Heart right ventricle (tissue), 16 donors: ENCODE measurements at regions of chr16 and their contacts with region 1.

Region 1: GRCh38 chr16:88063211-88063773 is 112.1 kb downstream of the BANP start:
- DNase-seq: peak in 1 of 2 donors; percentile 27
- ATAC-seq: peak; percentile 38 to 81 (median 67)
- H3K4me3 ChIP-seq: no peak overlapping the region
- H3K27ac ChIP-seq: peak overlapping the region in 7 of 10 donors; percentile 29 to 74 (median 59)
- H3K4me1 ChIP-seq: peaks cover 0 to 25% (median 20%) of the 10 kb centered on the region in 9 donors
- H3K27me3 ChIP-seq: no peaks in the 10 kb centered on the region
- CTCF ChIP-seq: peak in 6 of 9 donors; percentile 9 to 44 (median 30)

Region 2: GRCh38 chr16:87982491-87983415 is 80.5 kb before region 1 on chr16:
- intact Hi-C with region 1: loop called in 1 of 10 experiments (anchors 10 kb)
- DNase-seq: no peak
- ATAC-seq: peak in 5 of 8 donors; percentile 4 to 23 (median 12)
- H3K4me3 ChIP-seq: no peak overlapping the region
- H3K27ac ChIP-seq: no peak overlapping the region
- H3K4me1 ChIP-seq: peaks cover 0 to 37% (median 3%) of the 10 kb centered on the region in 9 donors
- H3K27me3 ChIP-seq: no peaks in the 10 kb centered on the region
- CTCF ChIP-seq: no peak

Region 3: DNA sequence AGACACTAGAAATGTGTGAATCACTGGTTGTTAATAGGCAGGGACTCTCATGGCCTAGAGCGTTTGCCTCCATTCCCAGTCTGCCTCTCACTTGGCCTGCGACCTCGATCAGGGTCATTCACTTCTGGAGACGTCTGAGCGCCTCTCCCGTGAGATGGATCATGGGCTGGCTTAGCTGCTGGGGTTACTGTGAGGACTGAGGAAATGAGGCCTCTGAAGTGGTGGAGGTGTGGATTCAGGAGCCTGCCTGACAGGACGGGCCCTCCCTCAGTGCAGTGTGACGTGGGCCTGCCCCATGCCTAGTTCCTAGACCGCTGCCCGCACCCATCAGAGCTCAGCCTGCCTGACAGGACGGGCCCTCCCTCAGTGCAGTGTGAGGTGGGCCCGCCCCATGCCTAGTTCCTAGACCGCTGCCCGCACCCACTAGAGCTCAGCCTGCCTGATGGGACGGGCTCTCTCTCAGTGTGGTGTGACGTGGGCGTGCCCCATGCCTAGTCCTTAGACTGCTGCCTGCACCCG is 50.1 kb before region 1 on chr16:
- intact Hi-C with region 1: no loop called
- DNase-seq: no peak
- ATAC-seq: peak in 1 of 8 donors; percentile 24
- H3K4me3 ChIP-seq: no peak overlapping the region
- H3K27ac ChIP-seq: no peak overlapping the region
- H3K4me1 ChIP-seq: no peaks in the 10 kb centered on the region
- H3K27me3 ChIP-seq: no peaks in the 10 kb centered on the region
- CTCF ChIP-seq: no peak

Region 4: DNA sequence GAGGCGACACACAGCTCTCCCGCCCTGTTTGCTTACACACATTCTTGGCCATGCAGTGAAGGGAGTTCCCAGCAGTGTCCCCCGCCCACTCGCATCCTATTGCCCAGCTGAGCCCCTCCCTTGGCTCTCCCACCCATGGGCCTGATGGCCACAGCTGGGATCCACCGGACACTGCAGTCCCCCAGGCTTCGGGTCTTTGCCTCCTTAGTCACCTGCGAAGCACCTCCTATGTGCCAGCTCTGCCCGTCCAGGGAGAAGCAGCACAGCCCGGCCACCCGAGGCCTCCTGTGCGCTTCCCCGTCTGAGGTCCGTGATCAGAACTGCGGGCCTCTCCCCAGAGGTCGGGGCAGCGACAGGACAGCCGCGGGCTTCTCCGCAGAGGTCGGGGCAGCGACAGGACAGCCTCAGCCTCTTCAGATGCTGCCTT is 24.9 kb after region 1 on chr16:
- intact Hi-C with region 1: no loop called
- DNase-seq: no peak
- ATAC-seq: peak in 6 of 8 donors; percentile 23 to 56 (median 42)
- H3K4me3 ChIP-seq: no peak overlapping the region
- H3K27ac ChIP-seq: peak overlapping the region in 1 of 10 donors; percentile 31
- H3K4me1 ChIP-seq: peaks cover 0 to 42% (median 12%) of the 10 kb centered on the region in 9 donors
- H3K27me3 ChIP-seq: peaks cover 0 to 5% (median 0%) of the 10 kb centered on the region in 7 donors
- CTCF ChIP-seq: no peak

Region 5: DNA sequence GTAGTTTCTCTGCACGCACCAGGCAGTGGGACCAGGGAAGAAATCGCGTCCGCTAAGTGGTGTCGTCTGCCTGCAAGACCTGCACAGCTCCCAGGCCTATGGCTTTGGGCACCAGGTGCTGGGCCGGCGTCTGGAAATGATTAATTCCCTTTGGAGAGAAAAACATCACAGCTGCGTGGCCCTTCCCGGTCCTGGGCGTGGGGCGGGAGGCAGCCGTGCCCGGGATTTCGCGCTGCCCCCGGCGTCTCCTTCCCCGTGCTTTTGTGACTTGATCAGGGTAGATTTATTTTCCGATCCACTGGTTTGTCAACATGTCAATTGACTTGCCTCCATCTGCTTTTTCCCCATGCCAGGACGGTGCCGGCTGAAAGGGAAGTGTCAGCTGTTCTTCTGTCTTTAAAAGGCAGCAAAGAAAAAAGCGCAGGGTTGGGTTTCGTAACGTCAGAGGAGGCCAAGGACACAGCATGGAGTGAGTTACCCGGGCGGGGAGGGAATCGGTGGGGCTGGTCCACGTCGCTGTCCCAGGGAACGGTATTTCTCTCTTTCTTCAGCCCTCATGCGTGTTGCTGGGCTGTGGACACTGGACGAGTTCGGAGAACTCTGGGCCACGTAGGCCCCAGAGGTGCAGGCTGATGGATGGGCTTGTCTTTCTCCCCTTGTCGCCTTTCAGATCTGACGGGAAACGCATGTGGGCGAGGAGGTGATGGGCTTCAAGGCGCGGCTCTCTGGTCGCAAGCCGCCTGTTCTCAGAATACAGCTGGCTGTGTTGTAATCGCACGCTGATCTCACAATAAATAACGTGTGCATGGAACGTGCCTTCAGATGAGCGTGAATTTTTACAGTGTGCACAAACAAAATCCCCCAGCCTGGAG is 131.3 kb after region 1 on chr16:
- intact Hi-C with region 1: no loop called
- DNase-seq: no peak
- ATAC-seq: peak in 4 of 8 donors; percentile 16 to 32 (median 30)
- H3K4me3 ChIP-seq: no peak overlapping the region
- H3K27ac ChIP-seq: no peak overlapping the region
- H3K4me1 ChIP-seq: peaks cover 0 to 3% (median 0%) of the 10 kb centered on the region in 9 donors
- H3K27me3 ChIP-seq: no peaks in the 10 kb centered on the region
- CTCF ChIP-seq: no peak